Activated CD8-positive, alpha-beta T cell treated with anti-CD3 and anti-CD28 coated beads for 36 hours (primary cell): ENCODE measurements at regions of chr7 and their contacts with region 1.

Region 1: GRCh38 chr7:28298870-28299518 is 113.3 kb upstream of the CREB5 start:
- DNase-seq: no peak
- ATAC-seq: no peak
- H3K4me3 Mint-ChIP-seq: no peak overlapping the region
- H3K27ac Mint-ChIP-seq: no peak overlapping the region
- H3K4me1 Mint-ChIP-seq: peaks cover 2% of the 10 kb centered on the region
- H3K27me3 Mint-ChIP-seq: peaks cover 9% of the 10 kb centered on the region
- CTCF ChIP-seq: no peak

Region 2: DNA sequence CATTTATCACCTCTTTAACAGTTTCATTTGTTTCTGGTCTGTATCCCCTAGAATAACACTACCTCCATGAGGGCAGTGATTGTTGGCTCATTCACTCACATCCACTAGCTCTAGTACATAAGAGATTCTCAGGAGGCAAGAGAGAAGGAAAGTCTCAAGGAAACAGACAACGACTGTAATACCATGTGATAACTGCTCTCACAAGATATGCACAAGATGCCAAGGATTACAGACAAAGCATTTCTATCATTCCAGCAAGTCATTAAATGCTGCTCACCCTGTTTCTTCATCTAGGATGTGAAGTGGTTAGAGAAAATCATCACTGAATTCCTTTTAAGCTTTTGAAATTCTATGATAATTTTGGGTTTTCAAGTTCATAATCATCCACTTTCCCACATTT is 751.6 kb before region 1 on chr7:
- CTCF ChIA-PET with region 1: no interaction called
- POLR2A ChIA-PET with region 1: no interaction called
- intact Hi-C with region 1: no loop called
- DNase-seq: no peak
- ATAC-seq: no peak
- H3K4me3 Mint-ChIP-seq: no peak overlapping the region
- H3K27ac Mint-ChIP-seq: no peak overlapping the region
- H3K4me1 Mint-ChIP-seq: no peaks in the 10 kb centered on the region
- H3K27me3 Mint-ChIP-seq: no peaks in the 10 kb centered on the region
- CTCF ChIP-seq: no peak

Region 3: DNA sequence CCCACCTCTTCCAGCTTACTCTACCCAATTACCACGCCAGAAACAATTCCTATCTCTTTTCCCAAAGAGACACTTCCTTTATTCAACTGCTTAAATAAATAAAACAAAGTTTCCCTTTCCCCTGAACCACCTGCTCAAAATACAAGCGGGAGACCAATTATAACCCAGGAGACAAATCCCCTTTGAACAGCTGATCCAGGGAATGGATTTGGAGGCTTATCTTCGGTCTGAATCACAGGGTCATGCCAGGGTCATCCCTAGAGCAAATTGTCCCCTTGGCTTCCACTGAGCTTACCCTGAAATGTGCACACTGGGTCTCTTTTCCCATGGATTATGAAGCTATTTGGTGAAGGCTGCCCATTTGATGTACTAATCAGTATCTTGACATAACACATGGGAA is 18.5 kb before region 1 on chr7:
- CTCF ChIA-PET with region 1: interaction called, 10 read pairs
- POLR2A ChIA-PET with region 1: no interaction called
- intact Hi-C with region 1: no loop called
- DNase-seq: no peak
- ATAC-seq: no peak
- H3K4me3 Mint-ChIP-seq: no peak overlapping the region
- H3K27ac Mint-ChIP-seq: no peak overlapping the region
- H3K4me1 Mint-ChIP-seq: no peaks in the 10 kb centered on the region
- H3K27me3 Mint-ChIP-seq: peaks cover 17% of the 10 kb centered on the region
- CTCF ChIP-seq: no peak

Region 4: GRCh38 chr7:28364082-28364481 is 65.1 kb after region 1 on chr7:
- CTCF ChIA-PET with region 1: interaction called, 20 read pairs
- POLR2A ChIA-PET with region 1: interaction called, 3 read pairs
- intact Hi-C with region 1: no loop called
- DNase-seq: no peak
- ATAC-seq: no peak
- H3K4me3 Mint-ChIP-seq: no peak overlapping the region
- H3K27ac Mint-ChIP-seq: no peak overlapping the region
- H3K4me1 Mint-ChIP-seq: no peaks in the 10 kb centered on the region
- H3K27me3 Mint-ChIP-seq: peaks cover 9% of the 10 kb centered on the region
- CTCF ChIP-seq: peak; percentile 47

Region 5: DNA sequence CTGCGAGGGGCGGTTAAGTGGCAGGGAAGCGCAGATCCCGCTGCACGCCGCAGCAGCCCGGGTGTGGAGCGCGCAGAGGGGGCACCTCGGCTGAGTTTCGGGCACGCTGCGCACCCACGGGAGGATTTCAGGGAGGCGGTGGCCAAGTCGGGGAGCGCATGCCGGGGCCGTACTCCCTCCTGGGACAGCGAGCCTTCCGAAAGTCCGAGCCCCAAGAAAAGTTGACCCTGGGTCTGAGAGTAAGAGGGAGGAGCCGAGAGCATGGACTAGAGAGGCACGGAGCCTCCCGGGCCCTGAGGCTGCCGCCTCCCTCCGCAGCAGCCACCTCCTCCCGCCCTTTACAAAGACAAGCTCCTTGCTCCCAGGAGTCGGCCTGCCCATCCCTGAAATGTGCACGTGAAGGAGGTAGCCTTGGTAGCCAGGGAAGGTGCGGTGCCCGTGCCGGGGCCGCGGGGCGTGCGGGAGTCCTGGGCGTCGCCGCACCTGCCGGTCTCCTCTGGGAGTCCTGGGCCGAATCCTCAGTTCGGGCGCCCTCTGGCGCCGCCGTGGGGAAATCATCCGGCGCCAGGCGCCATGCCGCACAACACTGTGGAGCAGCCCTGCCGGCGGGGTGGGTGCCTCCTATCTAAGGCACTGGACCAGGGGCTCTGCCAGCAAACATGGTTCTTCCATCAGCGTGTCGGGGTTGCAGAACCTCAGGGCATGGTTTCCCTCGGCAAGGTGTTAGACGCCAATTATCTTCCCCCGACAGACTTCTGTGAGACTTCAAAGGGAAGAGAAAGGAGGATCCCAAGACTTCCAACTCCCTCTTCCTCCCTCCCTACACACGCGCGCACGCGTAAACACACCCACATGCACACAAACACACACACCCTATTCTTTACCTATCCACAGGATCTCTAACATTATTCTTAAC is 555.1 kb after region 1 on chr7:
- CTCF ChIA-PET with region 1: interaction called, 7 read pairs
- POLR2A ChIA-PET with region 1: no interaction called
- intact Hi-C with region 1: loop called (anchors 10 kb)
- DNase-seq: peak; percentile 76
- ATAC-seq: peak; percentile 99
- H3K4me3 Mint-ChIP-seq: peak overlapping the region; percentile 62
- H3K27ac Mint-ChIP-seq: no peak overlapping the region
- H3K4me1 Mint-ChIP-seq: peaks cover 7% of the 10 kb centered on the region
- H3K27me3 Mint-ChIP-seq: peaks cover 46% of the 10 kb centered on the region
- CTCF ChIP-seq: peak; percentile 73